ENCODE measurements at regions of chr10 and their contacts with region 1.

Region 1: GRCh38 chr10:24518981-24519597 is 204.6 kb downstream of the ARHGAP21 start:
- DNase-seq: peak; percentile 54
- CTCF ChIP-seq: peak; percentile 68

Region 2: GRCh38 chr10:23448802-23449570 is 1070.1 kb before region 1 on chr10:
- CTCF ChIA-PET with region 1: no interaction called
- POLR2A ChIA-PET with region 1: interaction called, 10 read pairs
- DNase-seq: peak; percentile 60
- CTCF ChIP-seq: no peak

Region 3: GRCh38 chr10:24503461-24504320 is 15.4 kb before region 1 on chr10:
- CTCF ChIA-PET with region 1: interaction called, 95 read pairs
- POLR2A ChIA-PET with region 1: no interaction called
- DNase-seq: peak; percentile 50
- CTCF ChIP-seq: peak; percentile 74

Region 4: GRCh38 chr10:24533981-24534380 is 14.9 kb after region 1 on chr10:
- CTCF ChIA-PET with region 1: interaction called, 39 read pairs
- POLR2A ChIA-PET with region 1: no interaction called
- DNase-seq: no peak
- CTCF ChIP-seq: no peak

Region 5: GRCh38 chr10:24806262-24806661 is 287.2 kb after region 1 on chr10:
- CTCF ChIA-PET with region 1: no interaction called
- POLR2A ChIA-PET with region 1: no interaction called
- DNase-seq: no peak
- CTCF ChIP-seq: no peak